ENCODE measurements at regions of chr14 and their contacts with region 1.

Region 1: DNA sequence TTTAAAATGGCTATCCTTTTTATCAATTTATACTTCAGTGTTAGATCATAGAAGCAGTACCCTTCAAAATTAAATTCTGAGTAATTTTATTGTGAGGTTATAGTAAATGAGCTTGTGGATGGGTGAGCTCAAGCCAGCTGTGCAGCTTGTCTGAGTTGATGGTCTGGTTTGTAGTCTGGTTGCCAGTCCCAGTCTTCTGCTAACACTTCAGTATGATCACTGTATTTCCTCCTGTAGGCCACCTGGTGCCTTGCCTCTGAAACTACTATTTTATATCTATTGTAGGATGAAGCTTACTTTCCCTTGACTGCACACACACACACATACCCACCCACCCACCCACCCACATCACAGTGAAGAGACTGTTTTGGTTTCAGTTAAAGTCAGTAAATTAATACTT is 496.4 kb downstream of the PCNX1 start:
- DNase-seq: peak; percentile 56
- H3K4me3 ChIP-seq: no peak overlapping the region
- H3K27ac ChIP-seq: no peak overlapping the region
- H3K4me1 ChIP-seq: peaks cover 11% of the 10 kb centered on the region
- CTCF ChIP-seq: no peak

Region 2: DNA sequence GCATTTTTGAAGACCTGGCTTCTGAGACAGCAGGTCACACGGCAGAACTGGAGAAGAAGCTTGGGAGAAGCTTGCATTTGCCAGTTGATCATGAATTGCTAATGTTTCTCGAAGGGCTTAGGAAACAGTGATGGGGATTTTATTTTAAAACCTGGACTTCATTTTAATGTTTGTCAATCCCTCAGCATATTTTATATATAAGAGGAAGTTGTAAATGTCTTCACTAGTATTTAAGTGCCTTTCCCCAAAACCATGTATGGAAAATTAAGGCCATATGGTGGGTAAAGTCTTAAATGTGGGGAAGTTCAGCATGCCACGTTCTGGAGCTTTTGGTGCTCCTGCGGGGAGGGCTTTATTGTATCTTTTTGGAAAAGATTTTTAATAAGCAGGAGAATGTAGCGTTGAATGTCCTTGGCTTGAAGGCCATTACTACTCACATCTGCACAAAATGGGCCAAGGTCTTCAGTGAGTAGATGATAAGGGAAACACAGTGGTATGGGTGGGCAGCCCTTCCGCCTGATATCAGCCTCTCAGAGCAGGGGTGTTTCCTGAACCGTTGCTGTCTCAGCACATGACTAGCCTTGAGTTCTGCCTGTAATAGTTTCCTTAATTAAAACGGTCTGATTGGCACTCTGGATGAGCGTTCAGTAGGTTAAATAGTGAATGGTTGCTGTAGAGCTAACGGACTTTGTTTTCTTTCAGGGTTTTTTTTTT is 15.0 kb after region 1 on chr14:
- CTCF ChIA-PET with region 1: no interaction called
- POLR2A ChIA-PET with region 1: interaction called, 10 read pairs
- intact Hi-C with region 1: no loop called
- DNase-seq: no peak
- H3K4me3 ChIP-seq: no peak overlapping the region
- H3K27ac ChIP-seq: no peak overlapping the region
- H3K4me1 ChIP-seq: no peaks in the 10 kb centered on the region
- CTCF ChIP-seq: no peak